ENCODE measurements at regions of chr10 and their contacts with region 1.

Region 1: GRCh38 chr10:117442944-117443685 is 67.9 kb upstream of the PDZD8 start:
- DNase-seq: peak; percentile 83
- ATAC-seq: peak; percentile 95
- H3K4me3 ChIP-seq: peak overlapping the region in 1 of 2 experiments; percentile 26; a peak in 2 of 4 replicates
- H3K27ac ChIP-seq: no peak overlapping the region
- H3K4me1 ChIP-seq: peaks cover 2 to 19% of the 10 kb centered on the region in 2 experiments; a peak in 2 of 4 replicates
- H3K27me3 ChIP-seq: no peaks in the 10 kb centered on the region; the same call in 1 of the 2 replicates
- CTCF ChIP-seq: peak; percentile 90 to 99 (median 99)
- POLR2A ChIP-seq: no peak
- RAD21 ChIP-seq: peak; percentile 89

Region 2: DNA sequence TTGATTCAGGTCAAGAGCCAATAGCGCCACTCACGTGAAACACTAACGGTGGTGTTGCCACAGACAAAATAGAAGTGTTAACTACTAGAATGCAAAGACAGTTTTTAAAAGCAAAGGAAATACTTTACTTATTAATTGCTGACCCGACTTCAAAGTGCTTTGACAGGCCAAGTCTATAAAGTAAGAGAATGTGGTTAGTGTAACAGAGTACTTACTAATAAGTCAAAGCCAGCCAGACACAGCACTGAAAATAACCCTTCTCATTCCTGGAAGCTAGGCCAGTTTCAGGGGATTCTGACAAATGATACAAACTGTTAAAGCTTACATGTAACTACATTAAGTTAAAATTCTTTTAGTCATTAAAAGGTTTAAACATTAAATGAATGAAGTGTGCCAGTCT is 543.5 kb before region 1 on chr10:
- CTCF ChIA-PET with region 1: no interaction called
- POLR2A ChIA-PET with region 1: no interaction called
- RAD21 ChIA-PET with region 1: no interaction called
- intact Hi-C with region 1: no loop called
- DNase-seq: no peak
- ATAC-seq: no peak
- H3K4me3 ChIP-seq: no peak overlapping the region
- H3K27ac ChIP-seq: no peak overlapping the region
- H3K4me1 ChIP-seq: no peaks in the 10 kb centered on the region
- H3K27me3 ChIP-seq: no peaks in the 10 kb centered on the region
- CTCF ChIP-seq: no peak
- POLR2A ChIP-seq: no peak
- RAD21 ChIP-seq: no peak

Region 3: GRCh38 chr10:117126034-117126433 is 317.1 kb before region 1 on chr10:
- CTCF ChIA-PET with region 1: no interaction called
- POLR2A ChIA-PET with region 1: no interaction called
- RAD21 ChIA-PET with region 1: no interaction called
- intact Hi-C with region 1: no loop called
- DNase-seq: no peak
- ATAC-seq: no peak
- H3K4me3 ChIP-seq: no peak overlapping the region
- H3K27ac ChIP-seq: no peak overlapping the region
- H3K4me1 ChIP-seq: 0 out of 4 replicates have a peak, but pooled peaks cover 0 to under 1% of the 10 kb centered on the region in 2 experiments
- H3K27me3 ChIP-seq: no peaks in the 10 kb centered on the region
- CTCF ChIP-seq: no peak
- POLR2A ChIP-seq: no peak
- RAD21 ChIP-seq: no peak

Region 4: GRCh38 chr10:117216611-117217195 is 226.4 kb before region 1 on chr10:
- CTCF ChIA-PET with region 1: interaction called, 77 read pairs
- POLR2A ChIA-PET with region 1: no interaction called
- RAD21 ChIA-PET with region 1: interaction called in 1 of 2 experiments, 3 read pairs
- intact Hi-C with region 1: no loop called
- DNase-seq: peak; percentile 54
- ATAC-seq: peak; percentile 84
- H3K4me3 ChIP-seq: peak overlapping the region; percentile 19 to 27
- H3K27ac ChIP-seq: peak overlapping the region; percentile 6; the same call in 1 of the 2 replicates
- H3K4me1 ChIP-seq: peaks cover 2 to 21% of the 10 kb centered on the region in 2 experiments; a peak in 2 of 4 replicates
- H3K27me3 ChIP-seq: peaks cover 6% of the 10 kb centered on the region; the same call in 1 of the 2 replicates
- CTCF ChIP-seq: peak; percentile 100
- POLR2A ChIP-seq: no peak
- RAD21 ChIP-seq: peak; percentile 99

Region 5: GRCh38 chr10:117425974-117426566 is 17.0 kb before region 1 on chr10:
- CTCF ChIA-PET with region 1: interaction called, 92 read pairs
- POLR2A ChIA-PET with region 1: no interaction called
- RAD21 ChIA-PET with region 1: interaction called in 1 of 2 experiments, 3 read pairs
- intact Hi-C with region 1: no loop called
- DNase-seq: no peak
- ATAC-seq: no peak
- H3K4me3 ChIP-seq: no peak overlapping the region
- H3K27ac ChIP-seq: no peak overlapping the region
- H3K4me1 ChIP-seq: no peaks in the 10 kb centered on the region
- H3K27me3 ChIP-seq: 0 out of 2 replicates have a peak, but pooled peaks cover 9% of the 10 kb centered on the region
- CTCF ChIP-seq: no peak
- POLR2A ChIP-seq: no peak
- RAD21 ChIP-seq: no peak

Region 6: DNA sequence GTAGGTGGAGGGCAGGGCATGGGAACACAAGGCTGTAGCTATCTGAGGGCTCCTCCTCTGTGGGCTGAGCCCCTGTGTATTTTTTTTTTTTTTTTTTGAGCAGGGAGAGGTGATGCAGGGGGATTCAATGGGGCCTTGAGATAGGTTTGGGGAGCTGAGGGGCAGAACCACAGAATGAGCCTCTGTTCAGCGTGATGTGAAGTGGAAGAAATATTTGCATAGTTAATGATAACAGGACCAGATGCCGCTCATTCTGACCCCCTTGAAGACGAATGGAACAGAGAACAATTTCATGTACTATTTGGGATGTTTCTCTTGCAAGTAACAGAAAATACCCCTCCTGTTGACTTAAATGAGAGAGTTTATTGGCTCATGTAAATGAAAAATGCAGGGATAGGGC is 29.8 kb after region 1 on chr10:
- CTCF ChIA-PET with region 1: interaction called, 34 read pairs
- POLR2A ChIA-PET with region 1: no interaction called
- RAD21 ChIA-PET with region 1: interaction called in 1 of 2 experiments, 6 read pairs
- intact Hi-C with region 1: loop called (anchors 1 kb)
- DNase-seq: no peak
- ATAC-seq: no peak
- H3K4me3 ChIP-seq: no peak overlapping the region
- H3K27ac ChIP-seq: no peak overlapping the region
- H3K4me1 ChIP-seq: peaks cover 0 to 2% of the 10 kb centered on the region in 2 experiments; a peak in 2 of 4 replicates
- H3K27me3 ChIP-seq: no peaks in the 10 kb centered on the region
- CTCF ChIP-seq: no peak
- POLR2A ChIP-seq: no peak
- RAD21 ChIP-seq: no peak

Region 7: GRCh38 chr10:117559712-117560111 is 116.6 kb after region 1 on chr10:
- CTCF ChIA-PET with region 1: no interaction called
- POLR2A ChIA-PET with region 1: no interaction called
- RAD21 ChIA-PET with region 1: no interaction called
- intact Hi-C with region 1: no loop called
- DNase-seq: no peak
- ATAC-seq: no peak
- H3K4me3 ChIP-seq: no peak overlapping the region
- H3K27ac ChIP-seq: no peak overlapping the region
- H3K4me1 ChIP-seq: no peaks in the 10 kb centered on the region
- H3K27me3 ChIP-seq: peaks cover 22% of the 10 kb centered on the region; the same call in 1 of the 2 replicates
- CTCF ChIP-seq: no peak
- POLR2A ChIP-seq: no peak
- RAD21 ChIP-seq: no peak

Region 8: DNA sequence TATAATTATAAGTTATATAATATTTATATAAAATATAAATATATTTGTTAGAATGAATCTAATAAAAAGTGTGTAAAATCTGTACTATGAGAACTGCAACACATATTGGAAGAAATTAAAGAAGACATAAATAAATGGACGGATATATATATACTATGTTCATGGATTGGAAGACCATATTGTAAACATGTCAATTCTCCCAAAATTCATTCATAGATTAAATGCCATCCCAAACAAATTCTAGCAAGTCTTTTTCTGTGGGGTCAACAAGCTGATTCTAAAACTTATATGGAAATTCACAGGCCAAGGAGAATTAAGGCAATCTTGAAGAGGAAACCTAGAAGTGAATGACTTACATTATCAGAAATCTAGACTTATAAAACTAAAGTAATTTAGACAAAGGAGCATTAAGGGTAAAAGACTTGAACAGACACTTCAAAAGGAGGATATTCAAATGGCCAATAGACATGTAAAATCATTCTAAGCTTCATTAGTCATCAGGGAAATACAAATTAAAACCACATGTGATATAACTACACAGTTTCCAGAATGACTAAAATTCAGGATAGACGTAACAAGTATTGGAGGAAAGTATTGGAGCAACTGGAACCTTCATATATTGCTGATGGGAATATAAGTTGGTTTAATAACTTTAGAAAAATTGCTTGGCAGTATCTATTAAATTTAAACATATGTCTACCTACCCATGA is 325.4 kb after region 1 on chr10:
- CTCF ChIA-PET with region 1: no interaction called
- POLR2A ChIA-PET with region 1: no interaction called
- RAD21 ChIA-PET with region 1: no interaction called
- intact Hi-C with region 1: no loop called
- DNase-seq: no peak
- ATAC-seq: no peak
- H3K4me3 ChIP-seq: no peak overlapping the region
- H3K27ac ChIP-seq: no peak overlapping the region
- H3K4me1 ChIP-seq: no peaks in the 10 kb centered on the region
- H3K27me3 ChIP-seq: peaks cover 50% of the 10 kb centered on the region
- CTCF ChIP-seq: no peak
- POLR2A ChIP-seq: no peak
- RAD21 ChIP-seq: no peak

Region 9: DNA sequence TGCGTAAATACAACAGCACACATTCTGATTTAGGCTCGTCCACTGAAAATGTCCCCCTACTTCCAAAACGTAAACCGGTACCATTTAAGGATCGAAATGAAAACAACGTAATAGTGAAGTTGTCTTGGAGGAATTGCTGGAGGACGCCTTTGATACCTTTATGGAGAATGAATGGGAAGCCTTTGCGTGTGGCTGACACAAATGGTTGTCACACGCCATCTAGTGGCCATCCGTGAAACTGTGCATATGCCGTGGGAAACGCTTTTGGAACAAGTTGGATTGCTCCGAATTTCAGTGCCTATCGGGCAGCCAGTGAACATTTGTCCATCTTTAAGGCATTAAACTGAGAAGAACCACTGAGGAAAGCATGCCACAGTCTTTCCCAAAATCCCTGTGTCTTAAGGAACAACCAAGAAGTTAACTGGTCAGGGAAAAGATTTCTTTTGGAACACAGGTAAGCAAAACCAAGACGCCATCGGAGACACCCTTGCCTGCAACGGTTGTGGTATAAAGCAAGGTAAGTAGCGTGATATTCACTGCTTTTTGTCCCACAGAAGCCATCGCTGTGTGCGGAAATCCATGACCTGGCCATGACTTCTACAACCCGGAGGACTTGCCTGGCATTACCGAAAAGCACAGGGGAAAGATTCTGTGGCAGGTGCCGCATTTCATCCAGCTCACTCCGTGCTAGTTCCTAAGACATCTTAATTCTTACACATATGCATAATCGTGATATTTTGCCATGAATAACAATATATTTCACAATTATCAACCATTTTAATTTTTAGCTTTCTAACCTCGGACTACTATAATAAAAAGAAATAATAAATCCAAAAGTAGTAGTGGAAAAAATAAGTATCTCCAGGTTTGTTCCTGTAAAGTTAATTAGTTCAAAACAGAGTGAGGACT is 798.4 kb after region 1 on chr10:
- CTCF ChIA-PET with region 1: interaction called, 8 read pairs
- POLR2A ChIA-PET with region 1: no interaction called
- RAD21 ChIA-PET with region 1: interaction called in 1 of 2 experiments, 3 read pairs
- intact Hi-C with region 1: loop called (anchors 1 kb)
- DNase-seq: peak; percentile 81
- ATAC-seq: peak; percentile 88
- H3K4me3 ChIP-seq: no peak overlapping the region
- H3K27ac ChIP-seq: no peak overlapping the region
- H3K4me1 ChIP-seq: no peaks in the 10 kb centered on the region
- H3K27me3 ChIP-seq: peaks cover 81% of the 10 kb centered on the region
- CTCF ChIP-seq: peak; percentile 92 to 99 (median 98)
- POLR2A ChIP-seq: no peak
- RAD21 ChIP-seq: peak; percentile 98

Region 10: GRCh38 chr10:118568327-118568848 is 1125.3 kb after region 1 on chr10:
- CTCF ChIA-PET with region 1: interaction called, 10 read pairs
- POLR2A ChIA-PET with region 1: no interaction called
- RAD21 ChIA-PET with region 1: no interaction called
- intact Hi-C with region 1: no loop called
- DNase-seq: peak; percentile 63
- ATAC-seq: peak; percentile 74
- H3K4me3 ChIP-seq: peak overlapping the region in 1 of 2 experiments; percentile 20; a peak in 2 of 4 replicates
- H3K27ac ChIP-seq: no peak overlapping the region
- H3K4me1 ChIP-seq: peaks cover 0 to 4% of the 10 kb centered on the region in 2 experiments; a peak in 1 of 4 replicates
- H3K27me3 ChIP-seq: no peaks in the 10 kb centered on the region
- CTCF ChIP-seq: peak; percentile 70 to 93 (median 73)
- POLR2A ChIP-seq: no peak
- RAD21 ChIP-seq: peak; percentile 96

Measured in HCT116 (cell line).